ENCODE measurements at regions of chr11 and their contacts with region 1.

Region 1: DNA sequence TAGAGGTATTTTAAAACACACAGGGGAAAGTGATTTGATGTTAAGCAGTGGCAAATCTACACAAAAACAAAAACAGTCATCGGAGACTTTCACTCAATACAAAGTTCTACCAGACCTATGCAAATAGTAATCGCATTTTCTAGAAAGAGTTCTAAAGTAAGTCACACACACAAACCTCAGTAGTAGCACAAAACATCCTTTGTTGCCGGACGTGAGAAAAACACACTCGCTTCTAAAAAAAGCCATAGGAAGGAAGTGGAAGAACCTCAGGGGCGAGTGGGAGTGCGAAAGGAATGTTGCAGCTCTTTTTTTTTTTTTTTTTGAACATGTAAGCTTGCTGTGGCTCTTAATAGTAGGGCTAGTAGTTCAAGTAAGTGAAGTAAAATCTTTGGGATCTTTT is 88.9 kb downstream of the MAML2 start:
- DNase-seq: peak; percentile 94
- H3K4me3 ChIP-seq: peak overlapping the region in 1 of 3 experiments; percentile 58
- H3K27ac ChIP-seq: peak overlapping the region; percentile 65
- H3K4me1 ChIP-seq: peaks cover 33% of the 10 kb centered on the region
- H3K27me3 ChIP-seq: no peaks in the 10 kb centered on the region
- CTCF ChIP-seq: no peak
- POLR2A ChIP-seq: peak; percentile 36

Region 2: DNA sequence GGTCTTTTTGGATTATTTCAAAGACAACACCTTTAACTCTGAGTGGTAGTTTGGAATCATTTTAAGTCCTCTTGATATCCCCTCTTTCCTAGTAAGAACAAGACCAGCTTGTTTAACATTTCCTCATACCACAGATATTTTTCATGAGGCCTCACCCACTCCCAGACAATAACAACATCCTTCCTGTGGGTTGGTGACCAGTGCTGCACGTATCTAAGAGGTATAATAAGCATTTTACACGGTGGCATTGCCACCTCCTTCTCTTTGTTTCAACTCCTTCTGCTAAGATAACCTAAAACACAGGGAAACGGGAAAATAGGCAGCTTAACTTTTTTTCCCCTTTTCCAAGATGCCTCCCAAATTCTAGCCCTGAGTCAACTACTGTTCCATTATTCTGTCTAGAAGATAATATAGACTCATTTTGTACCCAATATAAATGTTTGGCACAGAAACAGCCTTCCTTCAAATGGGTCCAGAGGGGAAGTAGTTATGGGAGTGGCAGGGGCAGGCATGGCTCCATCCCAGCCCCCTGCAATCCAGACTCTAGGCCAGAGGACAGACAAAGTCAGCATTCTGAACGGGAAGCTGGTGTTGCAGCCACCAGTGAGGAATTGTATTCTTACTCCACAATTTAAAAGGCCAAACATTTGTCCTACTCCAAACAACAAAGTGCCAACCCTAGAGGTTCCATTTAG is 60.4 kb after region 1 on chr11:
- CTCF ChIA-PET with region 1: no interaction called
- POLR2A ChIA-PET with region 1: interaction called, 3 read pairs
- dilution Hi-C with region 1: no loop called
- intact Hi-C with region 1: loop called (anchors 2 kb)
- DNase-seq: peak; percentile 65
- H3K4me3 ChIP-seq: peak overlapping the region in 1 of 3 experiments; percentile 9
- H3K27ac ChIP-seq: peak overlapping the region; percentile 95
- H3K4me1 ChIP-seq: peaks cover 72% of the 10 kb centered on the region
- H3K27me3 ChIP-seq: no peaks in the 10 kb centered on the region
- CTCF ChIP-seq: no peak
- POLR2A ChIP-seq: peak; percentile 55

Measured in endothelial cell of umbilical vein (primary cell).